CD8-positive, alpha-beta memory T cell (primary cell): ENCODE measurements at regions of chr1 and their contacts with region 1.

Region 1: GRCh38 chr1:235971571-235972310 is 93.1 kb downstream of the NID1 start:
- DNase-seq: peak; percentile 73 to 91 (median 80)
- H3K4me3 ChIP-seq: peak overlapping the region; percentile 41
- H3K4me3 Mint-ChIP-seq: peak overlapping the region; percentile 5 to 87 (median 68)
- H3K27ac ChIP-seq: peak overlapping the region; percentile 50
- H3K27ac Mint-ChIP-seq: peak overlapping the region; percentile 44 to 95 (median 90)
- H3K4me1 ChIP-seq: peaks cover 10% of the 10 kb centered on the region
- H3K4me1 Mint-ChIP-seq: peaks cover 14 to 17% (median 16%) of the 10 kb centered on the region in 3 donors
- H3K27me3 ChIP-seq: no peaks in the 10 kb centered on the region
- H3K27me3 Mint-ChIP-seq: no peaks in the 10 kb centered on the region

Region 2: GRCh38 chr1:235783148-235783776 is 188.5 kb before region 1 on chr1:
- CTCF ChIA-PET with region 1: interaction called, 33 read pairs
- POLR2A ChIA-PET with region 1: no interaction called
- DNase-seq: peak in 2 of 5 donors; percentile 3 to 7
- H3K4me3 ChIP-seq: no peak overlapping the region
- H3K4me3 Mint-ChIP-seq: no peak overlapping the region
- H3K27ac ChIP-seq: no peak overlapping the region
- H3K27ac Mint-ChIP-seq: peak overlapping the region in 1 of 8 donors; percentile 61
- H3K4me1 ChIP-seq: no peaks in the 10 kb centered on the region
- H3K4me1 Mint-ChIP-seq: no peaks in the 10 kb centered on the region
- H3K27me3 ChIP-seq: no peaks in the 10 kb centered on the region
- H3K27me3 Mint-ChIP-seq: no peaks in the 10 kb centered on the region

Region 3: GRCh38 chr1:235858766-235859165 is 113.0 kb before region 1 on chr1:
- CTCF ChIA-PET with region 1: interaction called, 14 read pairs
- POLR2A ChIA-PET with region 1: interaction called, 4 read pairs
- DNase-seq: no peak
- H3K4me3 ChIP-seq: no peak overlapping the region
- H3K4me3 Mint-ChIP-seq: no peak overlapping the region
- H3K27ac ChIP-seq: no peak overlapping the region
- H3K27ac Mint-ChIP-seq: no peak overlapping the region
- H3K4me1 ChIP-seq: peaks cover 47% of the 10 kb centered on the region
- H3K4me1 Mint-ChIP-seq: peaks cover 22 to 55% (median 42%) of the 10 kb centered on the region in 3 donors
- H3K27me3 ChIP-seq: no peaks in the 10 kb centered on the region
- H3K27me3 Mint-ChIP-seq: no peaks in the 10 kb centered on the region

Region 4: DNA sequence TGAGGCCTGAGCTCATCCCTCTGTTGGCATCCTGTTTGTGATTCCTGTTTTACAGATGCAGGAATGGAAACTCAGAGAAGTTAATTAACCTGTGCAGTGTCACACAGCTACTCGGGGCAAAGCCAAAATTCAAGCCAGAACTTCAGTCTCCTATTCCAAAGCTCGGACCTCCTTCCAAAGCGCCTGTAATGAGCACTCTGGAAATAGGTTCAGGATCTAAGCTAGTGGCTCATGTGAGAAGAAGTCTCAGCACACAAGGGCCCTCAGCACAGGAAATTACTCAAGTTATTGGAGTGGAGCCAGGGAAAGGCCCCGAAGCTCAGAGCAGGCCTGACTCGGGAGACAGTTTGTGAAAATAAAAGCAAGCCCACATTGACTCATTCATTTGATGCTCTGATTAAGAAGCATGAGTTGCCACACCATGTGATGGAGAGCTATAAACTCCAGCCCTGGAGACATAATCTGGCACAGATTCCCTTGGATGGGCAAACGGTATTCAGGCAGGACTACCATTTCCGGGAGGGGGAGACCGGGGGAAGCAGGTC is 54.4 kb before region 1 on chr1:
- CTCF ChIA-PET with region 1: interaction called, 19 read pairs
- POLR2A ChIA-PET with region 1: no interaction called
- DNase-seq: peak in 4 of 5 donors; percentile 20 to 80 (median 47)
- H3K4me3 ChIP-seq: no peak overlapping the region
- H3K4me3 Mint-ChIP-seq: peak overlapping the region in 3 of 7 donors; percentile 38 to 50 (median 49)
- H3K27ac ChIP-seq: no peak overlapping the region
- H3K27ac Mint-ChIP-seq: peak overlapping the region; percentile 20 to 96 (median 88)
- H3K4me1 ChIP-seq: peaks cover 7% of the 10 kb centered on the region
- H3K4me1 Mint-ChIP-seq: peaks cover 11 to 41% (median 24%) of the 10 kb centered on the region in 3 donors
- H3K27me3 ChIP-seq: no peaks in the 10 kb centered on the region
- H3K27me3 Mint-ChIP-seq: peaks cover 0 to 4% of the 10 kb centered on the region in 2 donors

Region 5: DNA sequence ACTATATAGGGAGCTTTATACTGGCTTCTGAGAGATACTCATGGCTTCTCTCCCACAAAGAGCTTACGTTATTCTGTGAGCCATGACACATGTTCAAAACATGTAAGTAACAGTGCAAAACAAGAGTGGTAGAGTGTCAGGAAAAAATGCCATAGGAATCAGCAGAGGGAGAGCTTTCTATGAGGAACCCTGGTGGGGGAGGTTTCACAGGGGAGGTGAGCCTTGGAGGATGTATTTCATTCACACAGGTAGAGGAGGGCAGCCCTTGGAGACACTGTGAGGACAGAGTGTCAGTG is 32.3 kb before region 1 on chr1:
- CTCF ChIA-PET with region 1: interaction called, 10 read pairs
- POLR2A ChIA-PET with region 1: no interaction called
- DNase-seq: no peak
- H3K4me3 ChIP-seq: no peak overlapping the region
- H3K4me3 Mint-ChIP-seq: peak overlapping the region in 4 of 7 donors; percentile 30 to 81 (median 72)
- H3K27ac ChIP-seq: no peak overlapping the region
- H3K27ac Mint-ChIP-seq: peak overlapping the region in 7 of 8 donors; percentile 70 to 94 (median 89)
- H3K4me1 ChIP-seq: peaks cover 15% of the 10 kb centered on the region
- H3K4me1 Mint-ChIP-seq: peaks cover 38 to 46% (median 42%) of the 10 kb centered on the region in 3 donors
- H3K27me3 ChIP-seq: no peaks in the 10 kb centered on the region
- H3K27me3 Mint-ChIP-seq: peaks cover 0 to 1% of the 10 kb centered on the region in 2 donors

Region 6: DNA sequence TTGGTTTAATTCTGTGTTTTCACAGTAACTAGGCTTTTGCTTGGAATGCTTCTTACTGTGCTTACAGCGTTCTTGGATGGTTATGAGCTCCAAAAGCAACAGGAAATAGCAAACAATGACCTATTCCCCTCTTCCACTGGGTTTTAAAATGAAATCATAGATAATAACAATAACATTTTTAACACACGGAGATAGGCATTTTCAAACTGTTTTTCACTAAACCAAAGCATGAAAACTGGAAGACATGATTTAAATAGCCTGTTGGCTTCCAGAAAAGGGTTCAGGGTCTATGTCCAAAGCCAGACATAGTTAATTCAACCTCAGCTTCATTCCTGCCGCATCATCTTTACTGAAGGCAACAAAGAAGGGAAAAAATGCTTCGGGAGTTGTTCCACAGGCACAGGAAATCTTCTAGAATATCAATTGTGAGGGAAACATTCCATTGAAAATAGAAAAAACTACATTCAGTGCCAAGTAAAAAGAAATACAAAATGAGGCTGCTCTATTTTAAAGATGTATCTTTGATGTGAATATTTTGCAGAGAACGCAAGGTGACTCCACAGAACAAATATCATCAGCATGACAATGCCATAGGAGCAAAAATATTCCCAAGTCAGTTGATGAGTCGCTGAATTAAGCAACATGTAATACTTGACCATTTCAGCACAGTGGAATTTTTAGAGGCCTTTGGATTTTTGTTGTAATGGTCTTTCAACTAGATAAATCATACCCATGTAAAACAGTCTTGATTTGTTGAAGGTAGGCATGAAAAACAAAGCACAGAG is 12.5 kb after region 1 on chr1:
- CTCF ChIA-PET with region 1: interaction called, 18 read pairs
- POLR2A ChIA-PET with region 1: no interaction called
- DNase-seq: no peak
- H3K4me3 ChIP-seq: no peak overlapping the region
- H3K4me3 Mint-ChIP-seq: no peak overlapping the region
- H3K27ac ChIP-seq: no peak overlapping the region
- H3K27ac Mint-ChIP-seq: no peak overlapping the region
- H3K4me1 ChIP-seq: no peaks in the 10 kb centered on the region
- H3K4me1 Mint-ChIP-seq: no peaks in the 10 kb centered on the region
- H3K27me3 ChIP-seq: no peaks in the 10 kb centered on the region
- H3K27me3 Mint-ChIP-seq: peaks cover 0 to 1% of the 10 kb centered on the region in 2 donors